Motor neuron (in vitro differentiated cells): ENCODE measurements at regions of chr3 and their contacts with region 1.

Region 1: GRCh38 chr3:150183678-150184425 is 213.2 kb upstream of the PFN2 start:
- ATAC-seq: peak; percentile 93 to 98 (median 97)
- H3K4me3 ChIP-seq: peak overlapping the region; percentile 15 to 30 (median 30)
- H3K27ac ChIP-seq: no peak overlapping the region
- H3K4me1 ChIP-seq: no peaks in the 10 kb centered on the region

Region 2: DNA sequence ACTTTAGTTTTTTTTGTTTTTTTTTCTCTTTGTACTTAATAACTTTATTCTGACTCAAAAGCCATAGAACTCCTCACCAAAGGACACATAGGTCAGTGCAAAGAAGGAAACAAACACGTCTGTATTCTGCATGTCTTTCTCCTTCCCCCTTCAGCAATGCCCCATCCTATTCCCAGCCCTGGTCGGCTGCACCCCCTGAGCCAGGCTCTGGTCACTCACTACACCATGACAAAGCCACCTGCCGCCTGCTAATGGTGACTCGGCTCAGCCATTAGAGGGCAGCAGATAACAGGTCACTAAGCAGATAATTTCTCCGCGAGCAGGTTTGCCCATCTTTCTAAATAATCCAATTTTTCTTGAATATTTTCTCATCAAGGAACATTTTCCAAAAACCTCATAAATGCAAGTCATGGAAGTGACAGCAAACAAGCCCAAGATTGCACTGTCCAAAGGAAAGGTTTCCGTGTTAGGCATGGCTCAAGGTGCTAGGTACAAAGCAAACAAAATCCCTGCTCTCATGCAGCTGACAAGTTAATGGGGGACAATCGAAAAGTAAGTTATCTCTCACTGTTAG is 671.6 kb before region 1 on chr3:
- in situ Hi-C with region 1: loop called in 1 of 9 experiments (anchors 25 kb)
- ATAC-seq: peak; percentile 35 to 97 (median 88)
- H3K4me3 ChIP-seq: peak overlapping the region in 4 of 5 donors; percentile 8 to 24 (median 12)
- H3K27ac ChIP-seq: no peak overlapping the region
- H3K4me1 ChIP-seq: no peaks in the 10 kb centered on the region

Region 3: DNA sequence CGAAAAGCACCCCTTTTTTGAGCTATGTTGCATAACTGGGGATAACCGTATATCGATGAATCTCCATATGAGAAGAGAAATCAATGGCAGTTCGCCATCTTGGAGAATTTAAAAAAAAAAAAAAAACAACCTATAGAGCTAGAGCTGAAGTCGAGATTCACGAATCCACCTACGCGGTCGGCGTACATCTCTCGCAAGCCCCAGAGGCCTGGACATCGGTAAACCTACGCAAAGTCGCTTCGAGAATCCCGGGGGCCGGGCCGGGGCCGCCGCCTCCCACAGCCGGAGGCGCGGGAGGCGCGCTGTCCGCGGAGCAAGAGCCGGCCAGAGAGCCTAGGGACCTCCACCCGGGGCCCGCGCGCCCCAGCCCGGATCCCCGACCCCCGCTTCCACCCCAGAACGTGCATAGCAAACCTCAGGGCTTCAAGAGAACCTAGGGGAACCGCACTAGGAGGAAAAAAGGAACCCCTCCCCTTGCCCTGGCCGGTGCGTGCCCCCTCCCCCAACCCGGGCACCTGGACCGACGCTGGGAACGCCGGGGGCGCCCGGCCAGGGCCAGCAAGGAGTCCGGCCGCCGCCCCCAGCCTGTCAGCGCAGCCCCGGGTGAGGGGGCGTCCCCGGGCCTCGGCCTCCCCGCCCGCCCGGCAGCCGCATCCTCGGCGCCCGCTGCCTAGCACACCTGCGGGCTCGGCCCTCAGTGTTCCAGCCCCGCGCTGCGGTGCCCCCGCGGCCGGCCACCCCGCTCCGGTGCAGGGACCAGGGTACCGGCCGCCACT is 213.7 kb before region 1 on chr3:
- in situ Hi-C with region 1: loop called in 8 of 9 experiments (anchors 10 to 25 kb)
- ATAC-seq: peak; percentile 44 to 70 (median 60)
- H3K4me3 ChIP-seq: peak overlapping the region; percentile 65 to 98 (median 92)
- H3K27ac ChIP-seq: peak overlapping the region; percentile 95 to 99
- H3K4me1 ChIP-seq: peaks cover 23 to 25% of the 10 kb centered on the region in 2 donors

Region 4: DNA sequence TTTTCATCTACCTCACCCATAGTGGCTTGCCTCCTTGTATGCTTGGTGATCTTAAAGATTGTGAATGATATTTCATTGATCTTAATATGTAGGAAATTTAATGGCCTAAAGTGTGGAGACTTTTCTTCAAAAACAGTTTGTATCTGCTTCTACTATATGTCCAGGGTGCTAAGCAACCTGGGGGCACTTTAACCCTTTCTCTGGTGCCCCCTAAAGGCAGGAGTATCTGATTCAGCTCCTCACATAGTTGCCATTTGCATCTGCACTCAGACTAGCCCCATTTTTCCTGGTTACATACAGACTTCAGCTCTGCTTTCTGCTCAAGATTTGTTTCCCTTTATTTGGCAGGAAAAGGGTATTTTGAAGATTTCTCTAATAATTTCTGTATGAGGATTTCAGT is 207.9 kb before region 1 on chr3:
- in situ Hi-C with region 1: loop called in 8 of 9 experiments (anchors 10 to 25 kb)
- ATAC-seq: no peak
- H3K4me3 ChIP-seq: no peak overlapping the region
- H3K27ac ChIP-seq: no peak overlapping the region
- H3K4me1 ChIP-seq: peaks cover 0 to 2% of the 10 kb centered on the region in 2 donors